H1 (cell line): ENCODE measurements at regions of chr11 and their contacts with region 1.

Region 1: GRCh38 chr11:65314501-65315203 is at the start of gene CDC42EP2:
- DNase-seq: peak in 1 of 2 experiments; percentile 87
- H3K4me3 ChIP-seq: peak within 1 kb of the TSS; percentile 34 to 84 (median 68)
- H3K27ac ChIP-seq: no peak within 1 kb of the TSS; the same call in 1 of the 2 replicates
- H3K4me1 ChIP-seq: peaks cover 0 to 15% (median 11%) of the 10 kb centered on the region in 4 experiments; a peak in 6 of 7 replicates
- H3K27me3 ChIP-seq: peaks cover 0 to 15% (median 10%) of the 10 kb centered on the region in 4 experiments; a peak in 5 of 7 replicates
- CTCF ChIP-seq: 0 out of 4 replicates have a peak, but pooled peaks of 1 of the 3 experiments have one; percentile 1
- EP300 ChIP-seq: no peak
- POLR2A ChIP-seq: peak; percentile 55 to 67; a peak in 2 of 3 replicates
- RAD21 ChIP-seq: no peak
- total RNA-seq, gene CDC42EP2: 11.7 and 11.8 TPM in 2 replicates

Region 2: GRCh38 chr11:65060913-65061408 is 253.7 kb before region 1 on chr11:
- CTCF ChIA-PET with region 1: no interaction called
- POLR2A ChIA-PET with region 1: no interaction called
- DNase-seq: peak in 1 of 2 experiments; percentile 67
- H3K4me3 ChIP-seq: no peak overlapping the region
- H3K27ac ChIP-seq: no peak overlapping the region
- H3K4me1 ChIP-seq: peaks cover 0 to 3% (median under 1%) of the 10 kb centered on the region in 4 experiments; a peak in 2 of 7 replicates
- H3K27me3 ChIP-seq: no peaks in the 10 kb centered on the region; a peak in 1 of 7 replicates
- CTCF ChIP-seq: peak; percentile 65 to 83 (median 68)
- EP300 ChIP-seq: no peak
- POLR2A ChIP-seq: no peak
- RAD21 ChIP-seq: peak; percentile 60 to 69

Region 3: GRCh38 chr11:65251476-65251875 is 63.2 kb before region 1 on chr11:
- CTCF ChIA-PET with region 1: interaction called, 21 read pairs
- POLR2A ChIA-PET with region 1: no interaction called
- DNase-seq: no peak
- H3K4me3 ChIP-seq: no peak overlapping the region
- H3K27ac ChIP-seq: no peak overlapping the region
- H3K4me1 ChIP-seq: no peaks in the 10 kb centered on the region; a peak in 2 of 7 replicates
- H3K27me3 ChIP-seq: no peaks in the 10 kb centered on the region
- CTCF ChIP-seq: no peak
- EP300 ChIP-seq: no peak
- POLR2A ChIP-seq: no peak
- RAD21 ChIP-seq: no peak

Region 4: GRCh38 chr11:65274735-65275682 is 39.6 kb before region 1 on chr11:
- CTCF ChIA-PET with region 1: interaction called, 1,179 read pairs
- POLR2A ChIA-PET with region 1: interaction called, 6 read pairs
- DNase-seq: peak in 1 of 2 experiments; percentile 29
- H3K4me3 ChIP-seq: no peak overlapping the region
- H3K27ac ChIP-seq: no peak overlapping the region
- H3K4me1 ChIP-seq: no peaks in the 10 kb centered on the region; a peak in 1 of 7 replicates
- H3K27me3 ChIP-seq: no peaks in the 10 kb centered on the region
- CTCF ChIP-seq: peak; percentile 65 to 95 (median 81)
- EP300 ChIP-seq: no peak
- POLR2A ChIP-seq: no peak
- RAD21 ChIP-seq: peak; percentile 87 to 94

Region 5: GRCh38 chr11:65301491-65302329 is 12.9 kb before region 1 on chr11:
- CTCF ChIA-PET with region 1: interaction called, 1,179 read pairs
- POLR2A ChIA-PET with region 1: interaction called, 208 read pairs
- DNase-seq: peak in 1 of 2 experiments; percentile 76
- H3K4me3 ChIP-seq: 0 out of 8 replicates have a peak overlapping the region, but pooled peaks of 1 of the 4 experiments have one; percentile 7
- H3K27ac ChIP-seq: no peak overlapping the region; the same call in 1 of the 2 replicates
- H3K4me1 ChIP-seq: peaks cover 0 to 12% (median 9%) of the 10 kb centered on the region in 4 experiments; a peak in 6 of 7 replicates
- H3K27me3 ChIP-seq: peaks cover 0 to 2% (median 0%) of the 10 kb centered on the region in 4 experiments; a peak in 3 of 7 replicates
- CTCF ChIP-seq: no peak
- EP300 ChIP-seq: no peak
- POLR2A ChIP-seq: no peak; a peak in 1 of 3 replicates
- RAD21 ChIP-seq: no peak

Region 6: GRCh38 chr11:65329944-65330403 is 15.3 kb after region 1 on chr11:
- CTCF ChIA-PET with region 1: interaction called, 220 read pairs
- POLR2A ChIA-PET with region 1: interaction called, 208 read pairs
- DNase-seq: peak in 1 of 2 experiments; percentile 91
- H3K4me3 ChIP-seq: no peak overlapping the region
- H3K27ac ChIP-seq: no peak overlapping the region
- H3K4me1 ChIP-seq: peaks cover 0 to 4% (median 2%) of the 10 kb centered on the region in 4 experiments; a peak in 3 of 7 replicates
- H3K27me3 ChIP-seq: no peaks in the 10 kb centered on the region; a peak in 1 of 7 replicates
- CTCF ChIP-seq: peak; percentile 29 to 79 (median 77)
- EP300 ChIP-seq: no peak
- POLR2A ChIP-seq: no peak
- RAD21 ChIP-seq: peak; percentile 49 to 60

Region 7: DNA sequence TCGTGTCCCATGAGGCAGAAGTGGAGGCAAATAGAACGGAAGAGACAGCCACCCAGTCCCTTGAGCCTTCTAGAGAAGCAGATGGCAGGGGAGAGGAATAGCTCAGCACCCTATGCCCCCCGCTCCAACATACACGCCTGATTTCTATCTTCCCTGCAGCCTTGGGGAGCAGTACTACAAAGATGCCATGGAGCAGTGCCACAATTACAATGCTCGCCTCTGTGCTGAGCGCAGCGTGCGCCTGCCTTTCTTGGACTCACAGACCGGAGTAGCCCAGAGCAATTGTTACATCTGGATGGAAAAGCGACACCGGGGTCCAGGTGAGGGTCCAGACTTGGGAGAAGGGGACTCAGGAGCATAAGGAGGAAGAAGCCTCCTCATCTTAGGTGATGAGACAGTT is 25.6 kb after region 1 on chr11:
- CTCF ChIA-PET with region 1: interaction called, 220 read pairs
- POLR2A ChIA-PET with region 1: interaction called, 208 read pairs
- DNase-seq: no peak
- H3K4me3 ChIP-seq: no peak overlapping the region
- H3K27ac ChIP-seq: no peak overlapping the region
- H3K4me1 ChIP-seq: no peaks in the 10 kb centered on the region
- H3K27me3 ChIP-seq: no peaks in the 10 kb centered on the region
- CTCF ChIP-seq: no peak
- EP300 ChIP-seq: no peak
- POLR2A ChIP-seq: no peak
- RAD21 ChIP-seq: no peak

Region 8: GRCh38 chr11:65512306-65512705 is 197.7 kb after region 1 on chr11:
- CTCF ChIA-PET with region 1: interaction called, 18 read pairs
- POLR2A ChIA-PET with region 1: interaction called, 8 read pairs
- DNase-seq: no peak
- H3K4me3 ChIP-seq: no peak overlapping the region
- H3K27ac ChIP-seq: no peak overlapping the region
- H3K4me1 ChIP-seq: no peaks in the 10 kb centered on the region
- H3K27me3 ChIP-seq: no peaks in the 10 kb centered on the region
- CTCF ChIP-seq: no peak
- EP300 ChIP-seq: no peak
- POLR2A ChIP-seq: no peak
- RAD21 ChIP-seq: no peak

Region 9: GRCh38 chr11:65588199-65589054 is 273.8 kb after region 1 on chr11:
- CTCF ChIA-PET with region 1: no interaction called
- POLR2A ChIA-PET with region 1: no interaction called
- DNase-seq: no peak
- H3K4me3 ChIP-seq: no peak overlapping the region
- H3K27ac ChIP-seq: no peak overlapping the region
- H3K4me1 ChIP-seq: peaks cover 3 to 31% (median 13%) of the 10 kb centered on the region in 4 experiments
- H3K27me3 ChIP-seq: peaks cover 27 to 57% (median 50%) of the 10 kb centered on the region in 4 experiments
- CTCF ChIP-seq: peak in 2 of 3 experiments; percentile 75 to 93; a peak in 3 of 4 replicates
- EP300 ChIP-seq: no peak
- POLR2A ChIP-seq: no peak
- RAD21 ChIP-seq: peak; percentile 58 to 71